ENCODE measurements at regions of chr6 and their contacts with region 1.

Region 1: DNA sequence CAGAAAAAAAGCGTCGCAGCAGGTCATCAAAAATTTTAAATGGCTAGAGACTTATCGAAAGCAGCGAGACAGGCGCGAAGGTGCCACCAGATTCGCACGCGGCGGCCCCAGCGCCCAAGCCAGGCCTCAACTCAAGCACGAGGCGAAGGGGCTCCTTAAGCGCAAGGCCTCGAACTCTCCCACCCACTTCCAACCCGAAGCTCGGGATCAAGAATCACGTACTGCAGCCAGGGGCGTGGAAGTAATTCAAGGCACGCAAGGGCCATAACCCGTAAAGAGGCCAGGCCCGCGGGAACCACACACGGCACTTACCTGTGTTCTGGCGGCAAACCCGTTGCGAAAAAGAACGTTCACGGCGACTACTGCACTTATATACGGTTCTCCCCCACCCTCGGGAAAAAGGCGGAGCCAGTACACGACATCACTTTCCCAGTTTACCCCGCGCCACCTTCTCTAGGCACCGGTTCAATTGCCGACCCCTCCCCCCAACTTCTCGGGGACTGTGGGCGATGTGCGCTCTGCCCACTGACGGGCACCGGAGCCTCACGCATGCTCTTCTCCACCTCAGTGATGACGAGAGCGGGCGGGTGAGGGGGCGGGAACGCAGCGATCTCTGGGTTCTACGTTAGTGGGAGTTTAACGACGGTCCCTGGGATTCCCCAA is at the start of gene EEF1A1:
- DNase-seq: peak; percentile 98 to 100 (median 99)
- H3K4me3 ChIP-seq: peak within 1 kb of the TSS; percentile 68 to 93
- H3K4me3 Mint-ChIP-seq: peak within 1 kb of the TSS; percentile 95 to 98 (median 96)
- H3K27ac ChIP-seq: peak within 1 kb of the TSS; percentile 100
- H3K27ac Mint-ChIP-seq: peak within 1 kb of the TSS; percentile 98 to 99 (median 98)
- H3K4me1 ChIP-seq: peaks cover 60% of the 10 kb centered on the region
- H3K4me1 Mint-ChIP-seq: peaks cover 39 to 81% (median 54%) of the 10 kb centered on the region in 4 donors
- H3K27me3 ChIP-seq: no peaks in the 10 kb centered on the region
- H3K27me3 Mint-ChIP-seq: no peaks in the 10 kb centered on the region
- total RNA-seq, gene EEF1A1: 15,632 to 16,691 TPM

Region 2: GRCh38 chr6:72622094-72622940 is 898.5 kb before region 1 on chr6:
- CTCF ChIA-PET with region 1: no interaction called
- POLR2A ChIA-PET with region 1: no interaction called
- intact Hi-C with region 1: loop called (anchors 5 kb)
- DNase-seq: peak; percentile 33 to 60 (median 43)
- H3K4me3 ChIP-seq: peak overlapping the region; percentile 30 to 65
- H3K4me3 Mint-ChIP-seq: peak overlapping the region; percentile 85 to 96 (median 91)
- H3K27ac ChIP-seq: no peak overlapping the region
- H3K27ac Mint-ChIP-seq: peak overlapping the region in 4 of 7 donors; percentile 55 to 89 (median 66)
- H3K4me1 ChIP-seq: peaks cover 32% of the 10 kb centered on the region
- H3K4me1 Mint-ChIP-seq: peaks cover 21 to 43% (median 30%) of the 10 kb centered on the region in 4 donors
- H3K27me3 ChIP-seq: no peaks in the 10 kb centered on the region
- H3K27me3 Mint-ChIP-seq: no peaks in the 10 kb centered on the region

Region 3: GRCh38 chr6:73451223-73452107 is 69.4 kb before region 1 on chr6:
- CTCF ChIA-PET with region 1: interaction called, 8 read pairs
- POLR2A ChIA-PET with region 1: interaction called, 58 read pairs
- intact Hi-C with region 1: loop called (anchors 2 kb)
- DNase-seq: peak; percentile 41 to 64 (median 49)
- H3K4me3 ChIP-seq: peak overlapping the region; percentile 97 to 98
- H3K4me3 Mint-ChIP-seq: peak overlapping the region; percentile 90 to 99 (median 97)
- H3K27ac ChIP-seq: peak overlapping the region; percentile 92
- H3K27ac Mint-ChIP-seq: peak overlapping the region; percentile 88 to 97 (median 92)
- H3K4me1 ChIP-seq: peaks cover 32% of the 10 kb centered on the region
- H3K4me1 Mint-ChIP-seq: peaks cover 14 to 44% (median 24%) of the 10 kb centered on the region in 4 donors
- H3K27me3 ChIP-seq: no peaks in the 10 kb centered on the region
- H3K27me3 Mint-ChIP-seq: no peaks in the 10 kb centered on the region

Region 4: GRCh38 chr6:73508776-73509175 is 12.0 kb before region 1 on chr6:
- CTCF ChIA-PET with region 1: interaction called, 3 read pairs
- POLR2A ChIA-PET with region 1: interaction called, 18 read pairs
- intact Hi-C with region 1: no loop called
- DNase-seq: no peak
- H3K4me3 ChIP-seq: no peak overlapping the region
- H3K4me3 Mint-ChIP-seq: no peak overlapping the region
- H3K27ac ChIP-seq: no peak overlapping the region
- H3K27ac Mint-ChIP-seq: no peak overlapping the region
- H3K4me1 ChIP-seq: no peaks in the 10 kb centered on the region
- H3K4me1 Mint-ChIP-seq: peaks cover 0 to 4% (median 1%) of the 10 kb centered on the region in 4 donors
- H3K27me3 ChIP-seq: no peaks in the 10 kb centered on the region
- H3K27me3 Mint-ChIP-seq: no peaks in the 10 kb centered on the region

Region 5: GRCh38 chr6:73585566-73586415 is 65.0 kb after region 1 on chr6:
- CTCF ChIA-PET with region 1: interaction called, 27 read pairs
- POLR2A ChIA-PET with region 1: interaction called, 233 read pairs
- intact Hi-C with region 1: loop called (anchors 1 kb)
- DNase-seq: peak; percentile 57 to 69 (median 63)
- H3K4me3 ChIP-seq: peak overlapping the region; percentile 54 to 56
- H3K4me3 Mint-ChIP-seq: peak overlapping the region; percentile 78 to 88 (median 84)
- H3K27ac ChIP-seq: peak overlapping the region; percentile 70
- H3K27ac Mint-ChIP-seq: peak overlapping the region; percentile 93 to 99 (median 98)
- H3K4me1 ChIP-seq: peaks cover 26% of the 10 kb centered on the region
- H3K4me1 Mint-ChIP-seq: peaks cover 15 to 34% (median 19%) of the 10 kb centered on the region in 4 donors
- H3K27me3 ChIP-seq: no peaks in the 10 kb centered on the region
- H3K27me3 Mint-ChIP-seq: no peaks in the 10 kb centered on the region

Region 6: GRCh38 chr6:73644941-73645591 is 124.2 kb after region 1 on chr6:
- CTCF ChIA-PET with region 1: interaction called, 4 read pairs
- POLR2A ChIA-PET with region 1: interaction called, 28 read pairs
- intact Hi-C with region 1: no loop called
- DNase-seq: no peak
- H3K4me3 ChIP-seq: no peak overlapping the region
- H3K4me3 Mint-ChIP-seq: peak overlapping the region; percentile 72 to 90 (median 84)
- H3K27ac ChIP-seq: no peak overlapping the region
- H3K27ac Mint-ChIP-seq: peak overlapping the region in 3 of 7 donors; percentile 55 to 75 (median 59)
- H3K4me1 ChIP-seq: peaks cover 6% of the 10 kb centered on the region
- H3K4me1 Mint-ChIP-seq: peaks cover 10 to 23% (median 18%) of the 10 kb centered on the region in 4 donors
- H3K27me3 ChIP-seq: no peaks in the 10 kb centered on the region
- H3K27me3 Mint-ChIP-seq: no peaks in the 10 kb centered on the region

Region 7: DNA sequence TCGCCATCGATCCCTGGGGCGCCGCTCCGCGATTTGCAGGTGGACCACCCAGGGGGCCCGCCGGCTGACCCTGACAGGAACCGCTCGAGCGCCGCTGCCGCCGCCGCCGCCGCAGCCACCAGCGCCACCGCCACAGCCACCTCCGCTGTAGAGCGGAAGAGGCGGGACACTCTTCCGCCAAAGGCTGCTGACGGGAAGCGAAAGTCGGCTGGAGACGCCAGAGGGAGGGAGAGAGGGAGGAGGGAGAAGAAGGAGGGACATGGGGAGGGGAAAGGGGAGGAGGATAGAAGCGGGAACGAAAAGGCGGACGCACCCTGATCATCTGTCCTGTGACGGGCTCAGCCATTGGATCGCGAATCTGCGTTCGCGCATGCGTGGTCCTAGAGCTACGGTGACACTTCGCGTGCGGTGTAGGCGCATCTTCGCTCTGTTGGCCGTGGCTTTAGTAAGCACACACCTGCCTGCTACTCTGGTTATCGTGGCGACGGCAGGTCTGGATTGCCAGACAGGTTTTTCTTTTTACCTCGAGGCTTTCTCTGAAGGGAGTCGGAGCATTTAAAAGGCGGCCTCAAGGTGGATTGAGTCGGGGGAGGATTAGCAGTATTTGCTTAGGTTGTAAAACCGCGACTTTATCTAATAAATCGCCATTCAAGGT is 1763.9 kb after region 1 on chr6 and contains the start of gene TMEM30A:
- CTCF ChIA-PET with region 1: no interaction called
- POLR2A ChIA-PET with region 1: interaction called, 3 read pairs
- intact Hi-C with region 1: loop called (anchors 1 kb)
- DNase-seq: peak; percentile 93 to 98 (median 97)
- H3K4me3 ChIP-seq: peak within 1 kb of the TSS; percentile 70 to 86
- H3K4me3 Mint-ChIP-seq: no peak within 1 kb of the TSS
- H3K27ac ChIP-seq: peak within 1 kb of the TSS; percentile 79
- H3K27ac Mint-ChIP-seq: no peak within 1 kb of the TSS
- H3K4me1 ChIP-seq: peaks cover 63% of the 10 kb centered on the region
- H3K4me1 Mint-ChIP-seq: peaks cover 23 to 39% (median 35%) of the 10 kb centered on the region in 4 donors
- H3K27me3 ChIP-seq: no peaks in the 10 kb centered on the region
- H3K27me3 Mint-ChIP-seq: no peaks in the 10 kb centered on the region
- total RNA-seq, gene TMEM30A: 73.6 to 78.3 TPM

Measured in CD4-positive, alpha-beta memory T cell (primary cell).